SK-N-SH (cell line): ENCODE measurements at regions of chr11 and their contacts with region 1.

Region 1: GRCh38 chr11:134139873-134140331 is 71.0 kb downstream of the JAM3 start:
- DNase-seq: peak; percentile 83
- H3K4me3 ChIP-seq: peak overlapping the region in 1 of 2 experiments; percentile 18; a peak in 1 of 4 replicates
- H3K27ac ChIP-seq: no peak overlapping the region; a peak in 1 of 4 replicates
- H3K4me1 ChIP-seq: no peaks in the 10 kb centered on the region; a peak in 1 of 4 replicates
- H3K27me3 ChIP-seq: no peaks in the 10 kb centered on the region
- CTCF ChIP-seq: peak; percentile 89
- EP300 ChIP-seq: no peak
- RAD21 ChIP-seq: peak; percentile 96

Region 2: DNA sequence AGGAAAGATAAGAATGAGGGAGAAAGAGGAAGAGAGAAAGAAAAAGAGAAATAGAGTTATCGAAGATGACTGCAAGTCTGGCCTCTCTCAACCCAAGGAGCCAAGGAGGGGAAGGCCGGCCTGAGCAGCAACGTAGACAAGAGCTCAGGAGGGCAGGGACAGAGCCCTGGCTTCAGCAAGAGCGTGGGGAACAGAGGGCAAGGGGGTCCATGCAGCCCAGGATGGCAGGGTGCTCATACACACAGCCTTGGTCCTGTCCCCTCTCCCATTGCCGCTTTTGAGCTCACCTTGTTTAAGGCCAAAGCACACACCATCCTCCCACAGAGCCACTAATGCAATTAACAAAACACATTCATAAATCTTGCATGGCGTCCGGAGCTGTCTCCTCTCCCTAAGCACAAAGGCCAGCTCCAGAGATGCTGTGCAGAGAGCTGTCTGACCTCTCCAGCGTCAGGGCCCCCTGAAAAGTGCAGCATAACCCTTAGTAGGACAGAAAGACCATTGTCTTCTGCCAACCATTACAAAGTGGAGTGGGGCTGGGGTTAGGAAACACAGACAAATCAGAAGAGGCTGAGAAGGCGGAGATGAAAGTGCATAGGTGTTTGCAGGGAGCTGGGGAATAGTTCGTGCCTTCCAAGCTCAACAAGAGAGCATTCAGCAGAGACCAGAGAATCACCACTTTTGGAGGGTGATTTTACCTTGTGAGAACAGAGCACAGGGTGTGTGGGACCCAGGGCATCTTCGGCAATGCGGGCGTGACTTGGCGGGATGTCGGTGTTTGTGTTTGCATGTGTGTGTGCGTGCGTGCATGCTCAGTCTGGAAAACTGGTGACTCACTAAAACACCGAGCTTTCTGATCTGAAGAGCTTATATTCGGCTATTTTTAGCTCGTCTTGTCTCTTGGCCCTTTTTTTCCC is 99.3 kb before region 1 on chr11:
- CTCF ChIA-PET with region 1: interaction called, 17 read pairs
- POLR2A ChIA-PET with region 1: no interaction called
- DNase-seq: no peak
- H3K4me3 ChIP-seq: no peak overlapping the region
- H3K27ac ChIP-seq: no peak overlapping the region; a peak in 1 of 4 replicates
- H3K4me1 ChIP-seq: peaks cover 3 to 52% of the 10 kb centered on the region in 2 experiments; a peak in 2 of 4 replicates
- H3K27me3 ChIP-seq: no peaks in the 10 kb centered on the region
- CTCF ChIP-seq: no peak
- EP300 ChIP-seq: no peak
- RAD21 ChIP-seq: no peak

Region 3: DNA sequence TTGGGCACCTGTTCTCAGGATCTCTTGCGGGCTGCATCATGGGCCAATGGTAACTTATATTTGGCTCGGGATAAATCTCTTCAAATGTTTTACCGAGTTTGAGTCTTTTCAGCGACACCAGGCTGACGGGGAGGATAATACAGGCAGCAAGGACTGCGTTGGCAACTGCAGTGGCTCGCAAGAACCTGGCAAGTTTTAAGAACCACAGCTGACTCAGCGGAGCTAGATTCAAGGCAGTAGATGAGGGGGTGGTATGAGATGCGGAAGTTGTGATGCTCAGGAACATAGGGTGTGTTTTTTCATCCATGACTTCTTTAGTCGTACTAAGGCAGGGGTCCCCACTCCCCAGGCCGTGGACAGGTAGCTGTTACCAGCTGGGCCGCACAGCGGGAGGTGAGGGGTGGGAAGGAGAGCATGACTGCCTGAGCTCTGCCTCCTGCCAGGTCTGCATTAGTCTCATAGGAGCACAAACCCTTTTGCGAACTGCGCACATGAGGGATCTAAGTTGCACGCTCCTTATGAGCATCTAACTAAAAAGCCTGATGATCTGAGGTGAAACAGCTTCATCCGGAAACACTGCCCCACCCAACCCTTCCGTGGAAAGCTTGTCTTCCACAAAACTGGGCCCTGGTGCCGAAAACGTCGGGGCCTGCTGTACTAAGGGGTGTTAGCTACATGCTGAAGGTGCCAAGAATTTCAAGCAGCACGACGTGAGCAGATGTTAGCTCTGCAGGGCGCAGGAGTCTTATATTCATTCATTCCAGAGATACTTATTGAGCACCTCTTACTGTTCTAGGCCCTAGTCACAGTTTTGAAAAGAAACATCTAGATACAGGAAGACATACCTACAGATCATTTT is 77.4 kb before region 1 on chr11:
- CTCF ChIA-PET with region 1: interaction called, 10 read pairs
- POLR2A ChIA-PET with region 1: no interaction called
- DNase-seq: no peak
- H3K4me3 ChIP-seq: no peak overlapping the region
- H3K27ac ChIP-seq: no peak overlapping the region
- H3K4me1 ChIP-seq: no peaks in the 10 kb centered on the region
- H3K27me3 ChIP-seq: peaks cover 12% of the 10 kb centered on the region; the same call in 1 of the 2 replicates
- CTCF ChIP-seq: no peak
- EP300 ChIP-seq: no peak
- RAD21 ChIP-seq: no peak

Region 4: DNA sequence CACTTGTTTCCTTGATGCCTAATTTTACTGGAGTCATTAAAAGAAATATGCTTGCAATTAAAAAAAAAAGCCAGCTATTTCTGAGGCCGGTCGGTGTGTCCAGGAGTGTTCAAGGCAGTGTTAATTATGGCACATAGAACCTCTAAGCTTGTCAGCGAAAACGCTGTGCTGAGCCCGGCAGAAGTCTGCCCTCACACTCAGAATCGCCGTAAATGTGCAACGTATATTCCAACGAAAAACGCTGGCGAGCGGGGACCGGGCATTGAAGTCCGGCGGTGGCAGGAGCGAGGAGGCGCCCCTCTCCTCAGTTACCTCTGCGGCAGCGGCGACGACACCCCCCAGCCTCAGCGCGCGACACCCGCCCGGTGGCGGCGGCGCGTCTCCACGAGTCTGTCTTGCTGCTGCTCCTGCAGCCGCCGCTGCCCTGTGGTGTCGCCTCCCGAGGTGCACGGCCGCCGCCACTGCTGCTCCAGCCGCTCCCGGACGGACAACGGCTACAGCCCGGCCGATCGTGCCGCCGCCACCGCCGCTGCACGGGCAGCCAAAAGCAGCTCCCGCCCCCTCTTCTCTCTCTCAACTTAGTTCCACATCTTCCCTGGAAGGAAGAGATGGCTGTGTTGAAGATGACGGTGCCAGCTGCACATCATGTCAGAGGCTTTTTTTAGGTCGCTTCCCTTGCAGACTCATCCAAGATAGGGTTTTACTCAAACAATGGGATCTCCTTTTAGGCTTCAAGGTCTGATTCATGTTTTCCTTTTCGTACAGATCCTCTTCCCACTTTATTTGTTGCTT is 15.0 kb before region 1 on chr11:
- CTCF ChIA-PET with region 1: interaction called, 25 read pairs
- POLR2A ChIA-PET with region 1: no interaction called
- DNase-seq: peak; percentile 86
- H3K4me3 ChIP-seq: peak overlapping the region; percentile 51 to 61
- H3K27ac ChIP-seq: peak overlapping the region; percentile 28 to 70; a peak in 3 of 4 replicates
- H3K4me1 ChIP-seq: peaks cover 22 to 45% of the 10 kb centered on the region in 2 experiments
- H3K27me3 ChIP-seq: no peaks in the 10 kb centered on the region
- CTCF ChIP-seq: no peak
- EP300 ChIP-seq: no peak
- RAD21 ChIP-seq: no peak